IMR-90 (cell line): ENCODE measurements at regions of chr7 and their contacts with region 1.

Region 1: DNA sequence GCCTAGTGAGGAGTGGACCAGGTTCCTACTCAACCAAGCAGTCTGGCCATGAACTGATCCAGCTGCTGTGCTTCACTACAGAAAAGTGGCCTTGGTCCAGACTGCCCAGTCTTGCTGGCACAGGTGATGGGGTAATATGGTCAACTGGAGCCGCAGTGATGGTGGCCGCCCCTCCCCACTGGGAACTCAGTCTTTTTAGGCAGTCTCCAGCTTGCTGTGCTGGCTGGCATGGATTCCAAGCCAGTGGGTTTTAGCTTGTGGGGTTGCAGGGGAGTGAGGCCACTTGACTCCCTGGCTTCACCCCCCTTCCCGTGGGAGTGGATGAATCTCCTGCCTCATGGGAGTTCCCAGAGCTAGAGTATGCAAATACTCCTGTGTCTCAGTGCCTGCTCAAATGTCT is 52.7 kb upstream of the CDK6 start:
- DNase-seq: no peak
- ATAC-seq: no peak
- H3K4me3 ChIP-seq: no peak overlapping the region
- H3K27ac ChIP-seq: no peak overlapping the region
- H3K4me1 ChIP-seq: no peaks in the 10 kb centered on the region
- H3K27me3 ChIP-seq: no peaks in the 10 kb centered on the region
- CTCF ChIP-seq: no peak
- POLR2A ChIP-seq: no peak
- RAD21 ChIP-seq: no peak

Region 2: GRCh38 chr7:92714767-92715166 is 174.3 kb before region 1 on chr7:
- CTCF ChIA-PET with region 1: no interaction called
- POLR2A ChIA-PET with region 1: no interaction called
- dilution Hi-C with region 1: no loop called
- in situ Hi-C with region 1: no loop called
- intact Hi-C with region 1: no loop called
- DNase-seq: no peak
- ATAC-seq: no peak
- H3K4me3 ChIP-seq: no peak overlapping the region
- H3K27ac ChIP-seq: no peak overlapping the region
- H3K4me1 ChIP-seq: peaks cover 10% of the 10 kb centered on the region
- H3K27me3 ChIP-seq: no peaks in the 10 kb centered on the region
- CTCF ChIP-seq: no peak
- POLR2A ChIP-seq: no peak
- RAD21 ChIP-seq: no peak

Region 3: GRCh38 chr7:92847305-92847704 is 41.8 kb before region 1 on chr7:
- CTCF ChIA-PET with region 1: no interaction called
- POLR2A ChIA-PET with region 1: no interaction called
- dilution Hi-C with region 1: no loop called
- in situ Hi-C with region 1: loop called (anchors 5 kb)
- intact Hi-C with region 1: no loop called
- DNase-seq: no peak
- ATAC-seq: no peak
- H3K4me3 ChIP-seq: no peak overlapping the region
- H3K27ac ChIP-seq: no peak overlapping the region
- H3K4me1 ChIP-seq: peaks cover 3% of the 10 kb centered on the region; the same call in 1 of the 2 replicates
- H3K27me3 ChIP-seq: no peaks in the 10 kb centered on the region
- CTCF ChIP-seq: no peak
- POLR2A ChIP-seq: no peak
- RAD21 ChIP-seq: no peak

Region 4: DNA sequence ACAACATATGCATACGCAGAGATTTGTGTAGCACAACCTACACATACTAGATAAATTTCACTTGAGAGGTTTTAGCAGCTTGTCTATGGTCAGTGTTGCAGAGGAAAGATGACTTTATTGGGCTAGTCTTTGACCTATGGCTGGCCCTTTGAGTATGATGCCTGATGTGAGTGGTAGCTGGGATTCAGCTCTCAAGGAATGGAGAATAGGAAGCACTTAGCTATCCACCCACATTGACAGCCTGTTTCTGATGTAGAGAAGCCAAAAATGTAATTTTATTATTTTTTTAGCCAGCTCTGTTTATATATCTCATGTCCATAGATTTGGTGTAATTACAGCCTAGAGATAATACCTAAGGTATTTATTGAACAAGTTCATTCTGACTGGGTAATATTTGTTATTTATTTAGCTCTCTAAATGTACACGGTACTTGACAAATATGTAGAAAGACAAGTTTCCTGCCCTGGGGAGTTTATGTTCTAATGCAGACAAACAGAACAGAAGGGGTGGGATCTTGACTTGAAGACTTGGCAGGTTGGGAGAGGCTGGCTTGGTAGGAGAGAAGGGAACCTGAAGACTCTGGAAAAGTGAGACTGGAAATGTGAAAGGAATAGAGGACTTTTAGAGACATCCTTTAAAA is 44.8 kb after region 1 on chr7:
- CTCF ChIA-PET with region 1: no interaction called
- POLR2A ChIA-PET with region 1: no interaction called
- dilution Hi-C with region 1: no loop called
- in situ Hi-C with region 1: no loop called
- intact Hi-C with region 1: no loop called
- DNase-seq: no peak
- ATAC-seq: peak; percentile 40; the same call in 1 of the 2 replicates
- H3K4me3 ChIP-seq: no peak overlapping the region
- H3K27ac ChIP-seq: no peak overlapping the region
- H3K4me1 ChIP-seq: no peaks in the 10 kb centered on the region
- H3K27me3 ChIP-seq: no peaks in the 10 kb centered on the region
- CTCF ChIP-seq: no peak
- POLR2A ChIP-seq: no peak
- RAD21 ChIP-seq: no peak